Activated naive CD4-positive, alpha-beta T cell treated with anti-CD3 and anti-CD28 coated beads for 36 hours (primary cell): ENCODE measurements at regions of chr19 and their contacts with region 1.

Region 1: GRCh38 chr19:6372594-6373095 is at the start of gene ALKBH7:
- DNase-seq: peak; percentile 99
- H3K4me3 Mint-ChIP-seq: peak within 1 kb of the TSS; percentile 89
- H3K27ac Mint-ChIP-seq: peak within 1 kb of the TSS; percentile 94
- H3K4me1 Mint-ChIP-seq: peaks cover 18% of the 10 kb centered on the region
- H3K27me3 Mint-ChIP-seq: no peaks in the 10 kb centered on the region
- total RNA-seq, gene ALKBH7: 39.5 to 42.4 TPM

Region 2: DNA sequence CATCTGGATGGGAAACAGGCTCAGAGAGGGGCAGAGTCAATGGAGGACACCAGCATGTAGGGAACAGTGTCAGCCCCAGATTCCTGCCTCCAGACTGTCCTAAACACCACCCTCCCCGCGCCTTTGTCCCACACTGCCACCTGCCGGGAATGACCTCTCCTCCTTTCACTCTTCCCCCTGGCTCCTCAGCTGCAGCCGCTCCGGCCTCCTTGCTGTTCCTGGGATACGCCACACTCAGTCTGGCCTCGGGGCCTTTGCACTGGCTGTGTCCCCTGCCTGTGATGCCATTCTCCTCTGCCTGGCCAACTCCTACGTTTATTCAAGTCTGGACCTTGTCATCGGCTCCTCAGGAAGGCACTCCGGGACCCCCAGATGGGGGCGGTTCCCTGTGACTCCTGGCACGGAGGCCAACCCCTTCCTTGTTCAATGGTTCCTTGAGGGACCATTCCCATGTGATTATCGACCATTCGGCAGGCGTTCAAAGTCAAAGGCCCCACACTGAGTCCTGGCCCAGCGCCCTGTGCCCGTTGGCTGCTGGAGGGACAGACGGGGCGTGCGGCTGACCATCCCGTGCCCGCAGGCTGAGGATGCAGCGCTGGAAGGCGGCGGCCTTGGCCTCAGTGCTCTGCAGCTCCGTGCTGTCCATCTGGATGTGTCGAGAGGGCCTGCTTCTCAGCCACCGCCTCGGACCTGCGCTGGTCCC is 548.9 kb before region 1 on chr19:
- CTCF ChIA-PET with region 1: no interaction called
- intact Hi-C with region 1: no loop called
- DNase-seq: no peak
- H3K4me3 Mint-ChIP-seq: no peak overlapping the region
- H3K27ac Mint-ChIP-seq: no peak overlapping the region
- H3K4me1 Mint-ChIP-seq: peaks cover 9% of the 10 kb centered on the region
- H3K27me3 Mint-ChIP-seq: no peaks in the 10 kb centered on the region

Region 3: GRCh38 chr19:6362027-6362350 is 10.7 kb before region 1 on chr19:
- CTCF ChIA-PET with region 1: interaction called, 3 read pairs
- intact Hi-C with region 1: loop called (anchors 1 kb)
- DNase-seq: no peak
- H3K4me3 Mint-ChIP-seq: peak overlapping the region; percentile 98
- H3K27ac Mint-ChIP-seq: peak overlapping the region; percentile 95
- H3K4me1 Mint-ChIP-seq: peaks cover 17% of the 10 kb centered on the region
- H3K27me3 Mint-ChIP-seq: no peaks in the 10 kb centered on the region

Region 4: GRCh38 chr19:6424939-6425731 is 52.5 kb after region 1 on chr19:
- CTCF ChIA-PET with region 1: no interaction called
- intact Hi-C with region 1: loop called (anchors 1 kb)
- DNase-seq: peak; percentile 100
- H3K4me3 Mint-ChIP-seq: peak overlapping the region; percentile 76
- H3K27ac Mint-ChIP-seq: peak overlapping the region; percentile 94
- H3K4me1 Mint-ChIP-seq: peaks cover 36% of the 10 kb centered on the region
- H3K27me3 Mint-ChIP-seq: no peaks in the 10 kb centered on the region

Region 5: DNA sequence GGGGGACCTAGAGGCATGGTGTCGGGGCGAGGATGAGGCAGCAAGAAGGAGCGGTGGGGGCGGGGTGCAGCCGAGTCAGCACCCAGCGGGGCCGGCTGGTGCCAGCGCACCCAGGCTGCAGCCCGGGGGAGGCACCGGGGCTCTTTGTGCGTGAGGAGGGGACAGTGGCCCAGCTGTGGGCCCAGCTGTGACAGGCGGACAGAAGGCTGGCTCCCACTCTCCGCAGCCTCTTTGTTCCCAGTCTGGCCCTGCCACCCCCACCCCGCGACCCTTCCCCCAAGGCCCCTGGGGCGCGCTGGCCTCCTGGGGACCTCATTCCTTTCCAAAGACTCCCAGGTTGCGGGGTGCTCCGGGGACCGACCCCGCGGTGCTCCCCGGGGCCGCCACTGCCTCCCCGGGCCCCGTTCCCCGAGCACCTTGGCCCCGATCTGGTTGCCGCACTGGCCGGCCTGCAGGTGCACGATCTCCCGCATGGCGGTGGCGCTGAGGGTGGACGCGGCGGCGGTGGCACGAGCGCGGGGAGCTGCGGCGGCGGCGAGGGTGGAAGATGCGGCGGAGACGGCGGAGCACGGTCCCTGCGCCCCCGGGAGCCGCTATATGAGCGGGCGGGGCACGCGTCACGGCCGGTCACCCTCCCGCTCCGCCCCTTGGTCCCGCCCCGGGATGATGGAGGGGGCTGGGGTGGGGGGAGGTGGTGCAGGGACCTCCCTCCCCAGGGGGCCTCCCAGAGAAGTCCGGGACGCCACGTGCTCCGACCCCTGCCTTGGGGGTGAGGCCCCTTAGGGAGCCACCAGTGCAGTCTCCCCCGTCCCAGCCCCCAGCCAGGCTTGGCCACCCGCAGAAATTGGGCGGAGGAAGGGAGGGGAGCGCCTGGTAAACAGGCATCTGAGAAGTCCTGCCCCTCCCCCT is 129.3 kb after region 1 on chr19 and contains the start of gene TUBB4A:
- CTCF ChIA-PET with region 1: no interaction called
- intact Hi-C with region 1: loop called (anchors 5 kb)
- DNase-seq: peak; percentile 58
- H3K4me3 Mint-ChIP-seq: peak within 1 kb of the TSS; percentile 68
- H3K27ac Mint-ChIP-seq: no peak within 1 kb of the TSS
- H3K4me1 Mint-ChIP-seq: peaks cover 9% of the 10 kb centered on the region
- H3K27me3 Mint-ChIP-seq: peaks cover 5% of the 10 kb centered on the region
- total RNA-seq, gene TUBB4A: 6.4 to 7.0 TPM